Activated B cell treated with CpG ODN at 0.5 μM for 24 hours (primary cell): ENCODE measurements at regions of chr22 and their contacts with region 1.

Region 1: DNA sequence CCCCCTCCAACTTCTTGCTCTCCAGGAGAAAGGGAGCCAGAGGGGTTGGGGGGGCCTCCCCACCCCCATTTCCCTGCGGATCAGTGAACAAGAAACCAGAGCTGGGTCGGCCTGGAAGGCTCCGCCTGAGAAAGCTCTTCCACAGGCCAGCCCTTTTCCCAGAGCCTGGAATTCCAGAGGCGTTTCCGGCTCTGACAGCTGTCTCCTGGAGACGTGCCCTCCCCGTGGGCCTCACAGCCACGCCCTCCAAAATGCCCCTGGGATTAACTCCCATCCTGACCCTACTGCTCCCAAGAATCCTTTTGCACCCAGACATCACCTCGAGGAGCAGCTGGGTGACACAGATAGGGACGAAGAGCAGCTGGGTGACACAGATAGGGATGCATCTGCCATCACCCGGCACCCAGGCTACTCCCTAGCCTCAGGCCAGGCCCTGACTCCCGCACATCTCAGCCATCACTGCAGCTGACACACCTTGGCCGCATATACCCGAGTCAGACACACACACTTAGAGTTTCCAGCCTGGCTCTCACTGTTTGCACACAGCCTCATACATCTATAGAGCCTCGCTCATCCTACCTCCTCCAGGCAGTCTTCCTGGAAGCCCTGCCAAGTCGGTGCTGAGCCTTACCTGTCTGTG is 7.6 kb upstream of the CDC42EP1 start:
- DNase-seq: no peak
- ATAC-seq: no peak
- H3K4me3 Mint-ChIP-seq: no peak overlapping the region
- H3K27ac Mint-ChIP-seq: no peak overlapping the region
- H3K4me1 Mint-ChIP-seq: no peaks in the 10 kb centered on the region
- H3K27me3 Mint-ChIP-seq: peaks cover 36% of the 10 kb centered on the region
- CTCF ChIP-seq: no peak

Region 2: GRCh38 chr22:37588546-37589215 is 36.0 kb after region 1 on chr22:
- CTCF ChIA-PET with region 1: no interaction called
- POLR2A ChIA-PET with region 1: no interaction called
- intact Hi-C with region 1: no loop called
- DNase-seq: no peak
- ATAC-seq: no peak
- H3K4me3 Mint-ChIP-seq: no peak overlapping the region
- H3K27ac Mint-ChIP-seq: no peak overlapping the region
- H3K4me1 Mint-ChIP-seq: peaks cover 11% of the 10 kb centered on the region
- H3K27me3 Mint-ChIP-seq: peaks cover 17% of the 10 kb centered on the region
- CTCF ChIP-seq: no peak

Region 3: DNA sequence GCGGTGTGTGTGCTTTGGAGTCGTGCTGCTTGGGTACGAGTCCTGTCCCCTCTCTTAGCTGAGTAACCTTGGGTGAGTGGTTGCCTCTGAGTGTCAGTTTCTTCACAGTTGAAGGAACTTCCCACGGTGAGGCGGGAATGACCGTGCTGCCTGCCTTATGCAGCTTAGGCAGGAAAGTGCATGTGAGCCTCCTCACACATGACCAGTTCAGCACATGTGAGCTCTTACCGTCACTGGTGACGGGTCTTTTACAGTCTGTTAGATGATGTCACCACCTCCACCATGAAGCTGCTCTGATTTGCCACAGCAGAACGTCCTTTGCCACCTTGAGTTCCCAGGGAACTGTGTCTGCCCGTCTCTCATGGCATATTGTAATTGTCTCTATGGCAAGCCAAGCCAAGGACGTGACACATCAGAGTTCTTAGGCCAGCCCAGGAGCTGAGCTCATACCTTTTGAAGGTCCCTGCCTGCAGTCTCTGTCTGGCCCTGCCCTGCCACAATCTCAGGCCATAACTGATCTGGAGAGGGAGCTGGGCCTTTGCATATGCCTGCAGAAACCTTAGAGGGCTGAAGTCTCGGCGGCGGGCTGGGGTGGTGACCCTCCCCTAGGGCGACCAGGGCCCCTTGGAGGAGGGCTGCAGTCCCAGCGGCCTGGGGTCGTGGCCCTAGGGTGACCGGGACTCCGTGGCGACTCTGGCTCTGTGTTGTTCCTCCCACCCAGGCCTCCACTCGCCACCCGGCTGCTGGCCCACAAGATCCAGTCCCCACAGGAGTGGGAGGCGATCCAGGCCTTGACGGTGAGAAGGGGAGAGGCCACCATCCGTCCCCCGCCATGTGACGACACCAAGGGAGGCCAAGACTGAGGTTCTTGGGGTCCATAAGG is 63.8 kb after region 1 on chr22:
- CTCF ChIA-PET with region 1: no interaction called
- POLR2A ChIA-PET with region 1: no interaction called
- intact Hi-C with region 1: no loop called
- DNase-seq: no peak
- ATAC-seq: peak; percentile 47
- H3K4me3 Mint-ChIP-seq: no peak overlapping the region
- H3K27ac Mint-ChIP-seq: peak overlapping the region; percentile 30
- H3K4me1 Mint-ChIP-seq: peaks cover 25% of the 10 kb centered on the region
- H3K27me3 Mint-ChIP-seq: no peaks in the 10 kb centered on the region
- CTCF ChIP-seq: no peak

Region 4: GRCh38 chr22:38347181-38347896 is 794.7 kb after region 1 on chr22:
- CTCF ChIA-PET with region 1: no interaction called
- POLR2A ChIA-PET with region 1: interaction called, 13 read pairs
- intact Hi-C with region 1: no loop called
- DNase-seq: peak; percentile 16
- ATAC-seq: no peak
- H3K4me3 Mint-ChIP-seq: no peak overlapping the region
- H3K27ac Mint-ChIP-seq: no peak overlapping the region
- H3K4me1 Mint-ChIP-seq: peaks cover 21% of the 10 kb centered on the region
- H3K27me3 Mint-ChIP-seq: no peaks in the 10 kb centered on the region
- CTCF ChIP-seq: no peak